Lower leg skin (tissue), 4 donors: ENCODE measurements at regions of chr12 and their contacts with region 1.

Region 1: DNA sequence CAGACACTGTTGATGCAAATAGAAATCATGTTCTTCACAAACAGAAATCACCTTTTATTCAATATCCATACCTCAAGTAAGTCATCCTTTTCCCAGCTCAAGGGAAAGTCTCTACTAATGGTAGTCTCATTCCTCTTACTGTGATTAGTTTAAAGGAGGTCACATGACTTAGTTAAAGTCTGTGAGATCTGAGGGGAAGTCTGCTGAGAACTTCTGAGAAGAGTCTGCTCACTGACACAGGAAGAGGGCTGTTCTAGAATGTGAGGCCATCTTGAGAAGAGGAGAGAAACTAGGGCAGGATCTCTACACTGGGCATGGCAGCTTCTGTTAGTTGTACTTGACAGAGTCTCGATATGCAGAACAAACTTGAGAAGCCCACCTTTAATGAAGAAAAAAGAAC is 146.8 kb downstream of the C12orf42 start:
- DNase-seq: no peak
- H3K4me3 ChIP-seq: no peak overlapping the region
- CTCF ChIP-seq: no peak
- POLR2A ChIP-seq: no peak

Region 2: DNA sequence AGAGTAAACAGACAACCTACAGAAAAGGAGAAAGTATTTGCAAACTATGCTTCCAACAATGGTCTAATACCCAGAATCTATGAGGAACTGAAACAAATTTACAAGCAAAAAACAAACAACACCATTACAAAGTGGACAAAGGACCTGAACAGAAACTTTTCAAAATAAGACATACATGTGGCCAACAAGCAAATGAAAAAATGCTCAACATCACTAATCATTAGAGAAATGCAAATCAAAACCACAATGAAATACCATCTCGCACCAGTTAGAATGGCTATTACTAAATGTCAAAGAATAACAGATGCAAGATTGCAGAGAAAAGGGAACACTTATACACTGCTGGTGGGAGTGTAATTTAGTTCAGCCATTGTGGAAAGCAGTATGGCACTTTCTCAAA is 21.0 kb after region 1 on chr12:
- intact Hi-C with region 1: loop called (anchors 1 kb)
- DNase-seq: no peak
- H3K4me3 ChIP-seq: no peak overlapping the region
- CTCF ChIP-seq: no peak
- POLR2A ChIP-seq: no peak

Region 3: DNA sequence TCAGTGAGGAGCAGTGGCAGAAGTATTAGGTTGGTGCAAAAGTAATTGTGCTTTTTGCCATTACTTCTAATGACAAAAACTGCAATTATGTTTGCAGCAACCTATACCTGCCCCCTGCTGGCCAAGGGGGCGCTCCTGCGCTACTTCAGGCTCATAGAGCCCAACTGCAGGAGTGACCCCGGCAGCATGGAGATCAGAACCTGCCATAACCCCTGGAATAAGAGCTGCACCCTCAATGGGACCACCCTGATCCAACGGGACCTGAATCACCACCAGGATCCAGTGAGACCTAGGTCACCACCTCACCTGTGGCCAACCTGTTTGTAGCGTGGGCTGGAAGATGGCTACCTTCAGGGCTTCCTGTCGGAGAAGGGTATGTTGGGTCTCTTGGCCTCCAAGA is 155.0 kb after region 1 on chr12:
- intact Hi-C with region 1: no loop called
- DNase-seq: no peak
- H3K4me3 ChIP-seq: no peak overlapping the region
- CTCF ChIP-seq: no peak
- POLR2A ChIP-seq: no peak

Region 4: GRCh38 chr12:104974616-104975290 is 1625.8 kb after region 1 on chr12:
- intact Hi-C with region 1: no loop called
- DNase-seq: peak in 1 of 2 donors; percentile 29
- H3K4me3 ChIP-seq: no peak overlapping the region
- CTCF ChIP-seq: no peak
- POLR2A ChIP-seq: no peak